Right ventricle myocardium inferior (tissue), 1 donor: ENCODE measurements at regions of chr9 and their contacts with region 1.

Region 1: GRCh38 chr9:93159601-93160471 is 24.1 kb upstream of the WNK2 start:
- DNase-seq: peak; percentile 94
- ATAC-seq: peak; percentile 95

Region 2: DNA sequence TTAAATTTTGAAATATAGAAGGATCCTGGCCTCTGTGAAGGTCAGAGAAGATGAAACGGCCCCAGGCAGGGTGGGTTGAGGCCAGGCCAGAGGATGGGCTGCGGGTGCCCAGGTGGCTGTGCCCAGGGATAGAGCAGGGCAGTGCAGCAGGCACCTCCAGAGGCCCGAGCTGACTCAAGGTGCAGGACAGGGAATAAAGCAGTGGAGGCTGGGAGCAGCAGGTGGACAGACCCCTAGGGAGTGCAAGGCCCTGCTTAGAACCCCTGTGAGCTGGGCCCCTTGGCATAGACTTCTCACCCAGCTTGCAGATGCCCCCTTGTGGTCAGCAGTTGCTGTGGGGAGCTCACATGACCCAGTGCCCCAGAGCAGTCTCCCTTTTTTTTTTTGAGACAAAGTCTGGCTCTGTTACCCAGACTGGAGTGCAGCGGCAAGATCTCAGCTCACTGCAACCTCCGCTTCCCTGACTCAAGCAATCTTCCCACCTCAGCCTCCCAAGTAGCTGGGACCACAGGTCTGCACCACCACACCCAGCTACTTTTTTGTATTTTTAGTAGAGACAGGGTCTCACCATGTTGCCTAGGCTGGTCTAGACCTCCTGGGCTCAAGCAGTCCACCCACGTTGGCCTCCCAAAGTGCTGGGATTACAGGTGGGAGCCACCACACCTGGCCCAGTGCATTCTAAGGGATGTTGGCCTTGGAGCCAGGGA is 142.9 kb after region 1 on chr9:
- intact Hi-C with region 1: loop called (anchors 1 kb)
- DNase-seq: peak; percentile 65
- ATAC-seq: peak; percentile 12

Region 3: GRCh38 chr9:93566408-93567270 is 406.8 kb after region 1 on chr9:
- intact Hi-C with region 1: loop called (anchors 5 kb)
- DNase-seq: peak; percentile 99
- ATAC-seq: peak; percentile 100

Region 4: GRCh38 chr9:93962561-93963440 is 803.0 kb after region 1 on chr9:
- intact Hi-C with region 1: loop called (anchors 5 kb)
- DNase-seq: peak; percentile 85
- ATAC-seq: peak; percentile 83